ENCODE measurements at regions of chr2 and their contacts with region 1.

Region 1: DNA sequence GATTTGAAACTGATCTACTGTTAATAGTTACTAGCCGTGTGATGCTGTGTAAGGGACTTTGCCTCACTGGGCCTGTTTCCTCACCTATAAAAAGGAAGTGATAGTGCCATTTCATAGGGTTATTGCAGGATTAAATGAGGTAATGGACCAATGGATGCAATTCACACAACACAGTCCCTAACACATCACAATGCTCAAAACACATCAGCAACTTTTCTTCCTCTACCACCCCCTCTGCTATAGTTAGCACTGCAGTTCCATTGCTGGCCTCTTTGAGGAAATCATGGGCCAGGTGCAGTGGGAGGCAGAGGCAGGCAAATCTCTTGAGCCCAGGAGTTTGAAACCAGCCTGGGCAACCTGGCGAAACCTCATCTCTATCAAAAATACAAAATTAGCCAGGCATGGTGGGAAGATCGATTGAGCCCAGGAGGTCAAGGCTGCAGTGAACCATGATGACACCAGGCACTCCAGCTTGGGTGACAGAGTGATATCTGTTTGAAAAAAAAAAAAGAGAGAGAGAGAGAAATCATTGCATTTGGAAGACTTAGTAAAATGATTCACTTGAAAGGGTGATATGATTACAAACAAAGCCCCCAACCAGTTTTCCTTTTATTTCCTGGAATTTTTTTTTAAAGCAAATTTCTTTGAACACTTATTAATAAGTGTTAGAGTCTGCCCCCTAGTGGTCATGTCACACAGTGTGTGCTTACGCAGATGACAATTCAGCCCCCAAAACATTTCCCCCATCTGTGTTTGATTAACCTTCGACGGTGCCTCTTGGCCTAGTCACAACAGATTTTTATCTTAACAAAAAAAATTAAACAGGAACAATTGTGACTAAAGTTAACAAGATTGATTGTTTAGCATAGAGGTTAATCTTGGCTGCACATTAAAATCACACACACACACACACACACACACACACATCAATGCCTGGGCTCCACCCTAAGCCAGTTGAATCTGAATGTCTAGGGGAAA is 88.6 kb upstream of the BCL11A start:
- DNase-seq: peak in 4 of 5 donors; percentile 9 to 27 (median 18)
- H3K4me3 ChIP-seq: no peak overlapping the region
- H3K4me3 Mint-ChIP-seq: no peak overlapping the region
- H3K27ac ChIP-seq: no peak overlapping the region
- H3K27ac Mint-ChIP-seq: no peak overlapping the region
- H3K4me1 ChIP-seq: no peaks in the 10 kb centered on the region
- H3K4me1 Mint-ChIP-seq: no peaks in the 10 kb centered on the region
- H3K27me3 ChIP-seq: no peaks in the 10 kb centered on the region
- H3K27me3 Mint-ChIP-seq: peaks cover 6 to 9% of the 10 kb centered on the region in 2 donors

Region 2: GRCh38 chr2:60070736-60071489 is 571.2 kb before region 1 on chr2:
- CTCF ChIA-PET with region 1: no interaction called
- POLR2A ChIA-PET with region 1: no interaction called
- intact Hi-C with region 1: no loop called
- DNase-seq: no peak
- H3K4me3 ChIP-seq: no peak overlapping the region
- H3K4me3 Mint-ChIP-seq: no peak overlapping the region
- H3K27ac ChIP-seq: no peak overlapping the region
- H3K27ac Mint-ChIP-seq: no peak overlapping the region
- H3K4me1 ChIP-seq: no peaks in the 10 kb centered on the region
- H3K4me1 Mint-ChIP-seq: no peaks in the 10 kb centered on the region
- H3K27me3 ChIP-seq: no peaks in the 10 kb centered on the region
- H3K27me3 Mint-ChIP-seq: no peaks in the 10 kb centered on the region

Region 3: GRCh38 chr2:60652832-60653340 is 10.8 kb after region 1 on chr2:
- CTCF ChIA-PET with region 1: interaction called, 17 read pairs
- POLR2A ChIA-PET with region 1: no interaction called
- intact Hi-C with region 1: no loop called
- DNase-seq: no peak
- H3K4me3 ChIP-seq: no peak overlapping the region
- H3K4me3 Mint-ChIP-seq: no peak overlapping the region
- H3K27ac ChIP-seq: no peak overlapping the region
- H3K27ac Mint-ChIP-seq: no peak overlapping the region
- H3K4me1 ChIP-seq: no peaks in the 10 kb centered on the region
- H3K4me1 Mint-ChIP-seq: no peaks in the 10 kb centered on the region
- H3K27me3 ChIP-seq: no peaks in the 10 kb centered on the region
- H3K27me3 Mint-ChIP-seq: peaks cover 6 to 12% of the 10 kb centered on the region in 2 donors

Region 4: DNA sequence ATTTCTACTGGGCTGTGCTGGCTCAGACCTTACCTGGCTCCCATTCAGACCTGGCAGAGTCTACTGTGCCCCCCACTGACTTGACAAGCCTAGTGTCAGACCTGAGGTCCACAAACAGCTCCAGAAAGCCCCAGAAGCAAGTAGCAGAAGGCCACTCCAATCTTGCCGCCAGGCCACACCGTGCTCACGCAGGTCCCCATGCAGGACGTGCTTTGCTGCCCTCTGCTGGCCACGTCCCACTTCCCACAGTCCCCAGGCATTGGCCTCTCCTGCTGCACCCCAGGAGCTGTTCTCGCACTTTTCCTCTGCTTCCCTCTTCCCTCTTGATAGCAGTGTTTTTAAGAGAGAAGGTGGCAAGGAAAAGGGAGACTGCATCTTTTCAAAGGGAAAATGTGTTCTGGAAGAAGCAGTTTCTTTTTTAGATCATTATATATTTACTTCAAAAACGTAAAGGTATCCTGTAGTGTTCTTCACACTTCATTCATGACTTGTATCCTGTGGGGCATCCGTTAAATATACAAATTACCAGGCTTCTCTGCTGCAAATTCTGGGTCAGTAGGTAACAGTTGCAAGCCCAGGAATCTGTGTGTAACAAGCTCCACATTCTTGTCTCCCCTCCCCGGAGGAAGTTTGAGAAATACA is 32.5 kb after region 1 on chr2:
- CTCF ChIA-PET with region 1: interaction called, 10 read pairs
- POLR2A ChIA-PET with region 1: no interaction called
- intact Hi-C with region 1: no loop called
- DNase-seq: peak; percentile 56 to 64 (median 62)
- H3K4me3 ChIP-seq: no peak overlapping the region
- H3K4me3 Mint-ChIP-seq: peak overlapping the region in 2 of 8 donors; percentile 32 to 36
- H3K27ac ChIP-seq: no peak overlapping the region
- H3K27ac Mint-ChIP-seq: peak overlapping the region in 2 of 7 donors; percentile 18 to 82
- H3K4me1 ChIP-seq: no peaks in the 10 kb centered on the region
- H3K4me1 Mint-ChIP-seq: peaks cover 0 to 3% (median 1%) of the 10 kb centered on the region in 4 donors
- H3K27me3 ChIP-seq: no peaks in the 10 kb centered on the region
- H3K27me3 Mint-ChIP-seq: peaks cover 4 to 8% of the 10 kb centered on the region in 2 donors

Region 5: GRCh38 chr2:60707750-60708371 is 65.8 kb after region 1 on chr2:
- CTCF ChIA-PET with region 1: no interaction called
- POLR2A ChIA-PET with region 1: no interaction called
- intact Hi-C with region 1: no loop called
- DNase-seq: peak in 4 of 5 donors; percentile 31 to 39 (median 32)
- H3K4me3 ChIP-seq: no peak overlapping the region
- H3K4me3 Mint-ChIP-seq: no peak overlapping the region
- H3K27ac ChIP-seq: no peak overlapping the region
- H3K27ac Mint-ChIP-seq: no peak overlapping the region
- H3K4me1 ChIP-seq: no peaks in the 10 kb centered on the region
- H3K4me1 Mint-ChIP-seq: no peaks in the 10 kb centered on the region
- H3K27me3 ChIP-seq: no peaks in the 10 kb centered on the region
- H3K27me3 Mint-ChIP-seq: peaks cover 6 to 12% of the 10 kb centered on the region in 2 donors